CD4-positive, alpha-beta T cell (primary cell): ENCODE measurements at regions of chr9 and their contacts with region 1.

Region 1: GRCh38 chr9:21802195-21803000 is at the start of gene MTAP:
- DNase-seq: peak; percentile 35 to 83 (median 57)
- ATAC-seq: peak; percentile 75
- H3K4me3 ChIP-seq: peak within 1 kb of the TSS; percentile 82
- H3K4me3 Mint-ChIP-seq: peak within 1 kb of the TSS; percentile 98
- H3K27ac ChIP-seq: peak within 1 kb of the TSS; percentile 16 to 55
- H3K27ac Mint-ChIP-seq: peak within 1 kb of the TSS; percentile 96
- H3K4me1 ChIP-seq: peaks cover 35% of the 10 kb centered on the region
- H3K4me1 Mint-ChIP-seq: peaks cover 47% of the 10 kb centered on the region
- H3K27me3 ChIP-seq: peaks cover 0 to 5% of the 10 kb centered on the region in 2 experiments
- H3K27me3 Mint-ChIP-seq: peaks cover 12% of the 10 kb centered on the region
- CTCF ChIP-seq: no peak
- total RNA-seq, gene MTAP: 17.2 to 17.8 TPM

Region 2: GRCh38 chr9:21570643-21571275 is 231.6 kb before region 1 on chr9:
- CTCF ChIA-PET with region 1: no interaction called
- POLR2A ChIA-PET with region 1: no interaction called
- intact Hi-C with region 1: loop called in 1 of 2 experiments (anchors 5 kb)
- DNase-seq: no peak
- ATAC-seq: no peak
- H3K4me3 ChIP-seq: no peak overlapping the region
- H3K4me3 Mint-ChIP-seq: no peak overlapping the region
- H3K27ac ChIP-seq: no peak overlapping the region
- H3K27ac Mint-ChIP-seq: no peak overlapping the region
- H3K4me1 ChIP-seq: no peaks in the 10 kb centered on the region
- H3K4me1 Mint-ChIP-seq: peaks cover 1% of the 10 kb centered on the region
- H3K27me3 ChIP-seq: no peaks in the 10 kb centered on the region
- H3K27me3 Mint-ChIP-seq: peaks cover 7% of the 10 kb centered on the region
- CTCF ChIP-seq: no peak

Region 3: GRCh38 chr9:21580636-21581353 is 221.6 kb before region 1 on chr9:
- CTCF ChIA-PET with region 1: no interaction called
- POLR2A ChIA-PET with region 1: no interaction called
- intact Hi-C with region 1: no loop called
- DNase-seq: no peak
- ATAC-seq: no peak
- H3K4me3 ChIP-seq: no peak overlapping the region
- H3K4me3 Mint-ChIP-seq: no peak overlapping the region
- H3K27ac ChIP-seq: no peak overlapping the region
- H3K27ac Mint-ChIP-seq: no peak overlapping the region
- H3K4me1 ChIP-seq: peaks cover 13% of the 10 kb centered on the region
- H3K4me1 Mint-ChIP-seq: peaks cover 43% of the 10 kb centered on the region
- H3K27me3 ChIP-seq: no peaks in the 10 kb centered on the region
- H3K27me3 Mint-ChIP-seq: no peaks in the 10 kb centered on the region
- CTCF ChIP-seq: no peak